Activated T-helper 2 cell treated with anti-CD3 and anti-CD28 coated beads, Interferon-gamma antibody, Interleukin-2, Interleukin-4, amounts not matched to agents 10 μg/mL and 5 μg/mL and 100 μg/mL, durations not matched to agents 14 hours and 24 hours and 36 hours (primary cell): ENCODE measurements at regions of chr14 and their contacts with region 1.

Region 1: DNA sequence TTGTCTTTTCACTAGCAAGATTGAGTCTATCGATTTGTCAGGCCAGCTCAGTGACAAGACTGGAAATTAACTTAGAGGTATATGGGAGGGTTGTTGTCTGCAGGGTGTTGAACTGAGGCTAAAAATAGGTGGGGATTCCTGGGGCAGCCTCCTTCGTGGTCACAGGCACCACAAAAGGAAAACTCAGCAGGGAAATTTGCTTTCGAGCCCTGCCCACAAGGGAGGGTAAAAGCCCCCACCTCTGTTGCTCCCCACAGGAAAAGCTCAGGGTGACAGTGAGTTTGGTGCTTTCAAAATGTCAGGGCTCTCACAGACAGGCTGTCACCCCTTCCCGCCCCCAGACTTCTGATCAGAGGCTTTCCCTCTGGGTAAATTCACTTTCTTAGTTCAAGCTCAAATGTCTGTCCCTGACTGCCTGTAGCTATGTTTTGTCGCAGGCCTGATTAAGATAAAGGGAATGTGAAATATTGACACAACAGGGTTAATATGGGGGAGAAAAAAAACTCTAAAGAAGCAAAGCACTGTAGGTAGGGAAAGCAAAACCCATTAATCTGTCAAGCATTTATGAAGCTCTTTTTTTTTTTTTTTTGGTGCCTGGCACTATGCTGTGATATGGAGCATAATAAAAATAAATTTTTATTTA is 11.7 kb upstream of the NFKBIA start:
- DNase-seq: peak; percentile 52
- H3K4me3 Mint-ChIP-seq: peak overlapping the region; percentile 72
- H3K27ac Mint-ChIP-seq: peak overlapping the region; percentile 95
- H3K4me1 Mint-ChIP-seq: peaks cover 52% of the 10 kb centered on the region
- H3K27me3 Mint-ChIP-seq: no peaks in the 10 kb centered on the region

Region 2: GRCh38 chr14:34875031-34875922 is 541.0 kb before region 1 on chr14 and contains the start of gene BAZ1A:
- intact Hi-C with region 1: loop called (anchors 2 kb)
- DNase-seq: peak; percentile 47
- H3K4me3 Mint-ChIP-seq: peak within 1 kb of the TSS; percentile 100
- H3K27ac Mint-ChIP-seq: peak within 1 kb of the TSS; percentile 100
- H3K4me1 Mint-ChIP-seq: peaks cover 22% of the 10 kb centered on the region
- H3K27me3 Mint-ChIP-seq: no peaks in the 10 kb centered on the region
- total RNA-seq, gene BAZ1A: 81.7 and 85.7 TPM in 2 replicates

Region 3: DNA sequence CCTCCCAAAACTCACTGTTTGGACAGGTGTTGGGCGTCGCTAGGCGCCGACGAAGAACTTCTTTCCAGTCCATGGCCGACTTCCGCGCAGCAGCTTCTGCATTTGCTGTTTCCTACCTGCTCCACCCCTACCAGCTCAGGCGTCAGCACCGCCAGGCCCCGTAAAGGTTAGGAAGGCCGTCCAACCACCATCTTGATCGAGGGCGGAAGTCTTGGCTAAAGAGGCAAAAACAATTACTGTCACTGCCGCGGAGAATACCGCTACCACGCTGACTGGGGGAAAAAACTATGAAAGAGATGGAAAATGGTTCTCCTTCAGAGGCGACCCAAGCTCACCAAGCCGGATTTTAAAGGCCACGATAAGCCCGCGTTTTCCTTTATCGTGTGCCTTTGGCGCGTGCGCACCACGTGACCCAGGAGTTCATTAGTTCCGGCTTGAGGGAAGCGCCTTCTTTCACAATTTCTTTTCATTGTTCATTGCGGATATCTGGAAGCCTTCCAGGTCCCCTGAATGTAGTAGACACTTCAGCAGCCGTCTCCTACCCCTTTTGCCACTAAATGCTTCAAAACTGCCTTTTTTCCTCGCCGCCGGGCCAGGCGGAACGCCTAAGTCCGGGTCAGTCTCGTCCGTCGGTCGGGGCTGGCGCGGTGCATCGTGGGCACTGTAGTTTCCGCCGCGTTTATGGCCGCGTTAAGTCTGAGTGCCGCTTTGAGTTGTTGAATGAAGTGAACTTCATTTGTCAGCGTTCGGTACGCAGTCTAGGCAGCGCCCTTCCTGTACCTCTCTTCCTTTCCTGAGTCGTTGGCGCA is 294.1 kb before region 1 on chr14 and contains the starts of genes PPP2R3C and PRORP:
- intact Hi-C with region 1: loop called (anchors 1 kb)
- DNase-seq: peak; percentile 88
- H3K4me3 Mint-ChIP-seq: peak within 1 kb of the TSS; percentile 96
- H3K27ac Mint-ChIP-seq: peak within 1 kb of the TSS; percentile 100
- H3K4me1 Mint-ChIP-seq: peaks cover 41% of the 10 kb centered on the region
- H3K27me3 Mint-ChIP-seq: no peaks in the 10 kb centered on the region
- total RNA-seq, gene PPP2R3C: 48.1 and 49.7 TPM in 2 replicates
- total RNA-seq, gene PRORP: 37.0 and 41.3 TPM in 2 replicates

Region 4: DNA sequence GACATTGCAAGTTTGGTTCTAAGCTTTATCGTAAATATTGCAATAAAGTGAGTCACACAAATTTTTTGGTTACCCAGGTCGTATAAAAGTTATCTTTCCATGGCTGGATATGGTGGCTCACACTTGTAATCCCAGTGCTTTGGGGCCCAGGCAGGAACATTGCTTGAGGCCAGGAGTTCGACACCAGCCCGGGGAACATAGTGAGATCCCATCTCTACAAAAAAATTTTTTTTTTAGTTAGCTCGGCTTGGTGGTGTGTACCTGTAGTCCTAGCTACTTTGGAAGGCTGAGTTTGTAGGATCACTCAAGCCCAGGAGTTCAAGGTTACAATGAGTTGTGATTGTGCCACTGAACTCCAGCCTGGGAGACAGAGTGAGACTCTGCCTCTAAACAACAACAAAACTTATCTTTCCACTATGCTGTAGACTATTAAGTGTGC is 269.5 kb before region 1 on chr14:
- intact Hi-C with region 1: no loop called
- DNase-seq: no peak
- H3K4me3 Mint-ChIP-seq: no peak overlapping the region
- H3K27ac Mint-ChIP-seq: no peak overlapping the region
- H3K4me1 Mint-ChIP-seq: peaks cover 8% of the 10 kb centered on the region
- H3K27me3 Mint-ChIP-seq: no peaks in the 10 kb centered on the region

Region 5: DNA sequence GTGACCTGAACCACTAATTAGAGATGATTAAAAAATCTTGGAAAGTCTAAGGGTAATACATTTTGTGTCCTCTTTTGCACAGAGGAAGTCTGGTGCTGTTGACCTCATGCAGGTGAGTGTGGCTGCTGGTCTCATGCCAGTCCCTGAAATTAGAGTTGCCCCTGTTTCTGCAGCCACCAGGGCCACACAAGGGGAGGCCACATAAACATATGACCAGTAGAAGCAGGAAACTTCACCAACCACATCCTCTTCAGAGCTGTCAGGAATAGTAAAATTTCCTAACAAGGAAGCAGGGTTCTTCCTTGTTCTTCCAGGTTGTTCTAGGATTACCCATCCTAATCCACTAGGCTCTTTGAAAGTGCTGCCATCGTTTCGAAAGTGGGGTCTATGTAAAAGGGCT is 95.8 kb before region 1 on chr14:
- intact Hi-C with region 1: loop called (anchors 1 kb)
- DNase-seq: no peak
- H3K4me3 Mint-ChIP-seq: no peak overlapping the region
- H3K27ac Mint-ChIP-seq: no peak overlapping the region
- H3K4me1 Mint-ChIP-seq: peaks cover 4% of the 10 kb centered on the region
- H3K27me3 Mint-ChIP-seq: no peaks in the 10 kb centered on the region

Region 6: GRCh38 chr14:35404449-35405303 is 11.6 kb before region 1 on chr14 and contains the start of gene NFKBIA:
- intact Hi-C with region 1: loop called (anchors 1 kb)
- DNase-seq: peak; percentile 93
- H3K4me3 Mint-ChIP-seq: peak within 1 kb of the TSS; percentile 99
- H3K27ac Mint-ChIP-seq: peak within 1 kb of the TSS; percentile 97
- H3K4me1 Mint-ChIP-seq: peaks cover 43% of the 10 kb centered on the region
- H3K27me3 Mint-ChIP-seq: no peaks in the 10 kb centered on the region
- total RNA-seq, gene NFKBIA: 386 and 390 TPM in 2 replicates

Region 7: GRCh38 chr14:35446450-35446849 is 30.2 kb after region 1 on chr14:
- intact Hi-C with region 1: no loop called
- DNase-seq: no peak
- H3K4me3 Mint-ChIP-seq: no peak overlapping the region
- H3K27ac Mint-ChIP-seq: no peak overlapping the region
- H3K4me1 Mint-ChIP-seq: no peaks in the 10 kb centered on the region
- H3K27me3 Mint-ChIP-seq: no peaks in the 10 kb centered on the region

Region 8: DNA sequence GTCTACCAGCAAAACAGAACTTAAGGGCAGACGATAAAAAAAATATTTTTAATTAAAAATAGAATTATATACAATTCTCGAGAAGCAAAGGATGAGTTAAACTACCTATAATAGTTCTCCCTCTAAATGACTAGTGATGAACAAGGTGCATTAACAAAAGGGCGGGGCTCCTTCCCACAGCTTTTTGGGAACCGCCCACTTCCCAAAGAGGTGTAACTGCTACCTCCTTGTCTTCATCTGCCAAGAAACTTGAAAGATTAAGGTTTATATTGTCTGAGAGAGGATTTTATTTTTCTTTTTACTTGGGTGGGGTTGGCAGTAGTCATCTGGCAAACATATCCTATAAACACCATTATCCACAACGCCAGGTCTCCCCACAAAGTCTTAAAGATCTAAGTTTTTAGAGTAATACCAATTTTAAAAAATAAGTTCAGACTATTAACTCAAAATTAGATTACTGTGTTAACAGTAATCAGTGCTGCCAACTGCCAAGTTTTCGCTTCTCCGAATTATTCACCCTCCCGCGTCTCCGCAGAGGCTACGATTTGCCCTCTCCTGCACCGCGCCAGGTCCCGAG is 391.9 kb after region 1 on chr14:
- intact Hi-C with region 1: loop called (anchors 5 kb)
- DNase-seq: no peak
- H3K4me3 Mint-ChIP-seq: peak overlapping the region; percentile 99
- H3K27ac Mint-ChIP-seq: peak overlapping the region; percentile 94
- H3K4me1 Mint-ChIP-seq: peaks cover 21% of the 10 kb centered on the region
- H3K27me3 Mint-ChIP-seq: peaks cover 7% of the 10 kb centered on the region